CD8-positive, alpha-beta T cell (primary cell): ENCODE measurements at regions of chr20 and their contacts with region 1.

Region 1: DNA sequence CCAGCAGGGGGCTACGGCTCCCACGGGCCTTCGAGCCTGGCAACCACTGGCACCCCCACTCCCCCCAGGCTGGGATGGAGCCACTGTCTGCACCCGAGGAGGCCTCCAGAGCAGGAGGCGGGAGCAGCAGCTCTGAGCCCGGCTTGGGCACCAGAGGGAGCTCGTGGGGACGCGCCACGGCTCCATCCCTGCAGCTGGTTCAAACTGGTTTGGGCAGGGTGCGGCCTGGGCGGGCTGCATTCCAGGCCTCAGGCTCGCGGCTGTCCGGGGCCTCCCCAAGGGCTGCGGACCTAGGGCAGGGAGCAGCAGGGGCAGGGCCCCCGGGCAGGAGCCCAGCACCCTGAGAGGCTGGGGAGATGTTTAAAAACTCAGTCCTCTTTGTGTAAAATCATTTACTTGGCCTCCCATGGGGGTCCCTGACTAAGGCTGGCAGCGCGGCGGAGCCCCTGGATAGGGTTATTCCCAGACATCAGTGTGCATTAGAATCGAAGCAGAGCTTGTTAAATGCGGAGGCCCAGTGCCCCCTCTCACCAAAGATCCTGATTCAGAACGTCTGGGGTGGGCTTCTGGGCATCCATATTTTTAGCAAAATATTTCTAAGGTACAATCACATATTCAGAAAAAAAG is 4.1 kb upstream of the BCAS4 start:
- DNase-seq: peak; percentile 58 to 89 (median 76)
- ATAC-seq: peak; percentile 54
- H3K4me3 ChIP-seq: peak overlapping the region in 1 of 2 experiments; percentile 10
- H3K4me3 Mint-ChIP-seq: peak overlapping the region; percentile 35
- H3K27ac ChIP-seq: peak overlapping the region; percentile 54 to 82
- H3K27ac Mint-ChIP-seq: peak overlapping the region; percentile 78
- H3K4me1 ChIP-seq: peaks cover 20% of the 10 kb centered on the region
- H3K4me1 Mint-ChIP-seq: peaks cover 17% of the 10 kb centered on the region
- H3K27me3 ChIP-seq: no peaks in the 10 kb centered on the region
- H3K27me3 Mint-ChIP-seq: no peaks in the 10 kb centered on the region
- CTCF ChIP-seq: peak; percentile 74

Region 2: DNA sequence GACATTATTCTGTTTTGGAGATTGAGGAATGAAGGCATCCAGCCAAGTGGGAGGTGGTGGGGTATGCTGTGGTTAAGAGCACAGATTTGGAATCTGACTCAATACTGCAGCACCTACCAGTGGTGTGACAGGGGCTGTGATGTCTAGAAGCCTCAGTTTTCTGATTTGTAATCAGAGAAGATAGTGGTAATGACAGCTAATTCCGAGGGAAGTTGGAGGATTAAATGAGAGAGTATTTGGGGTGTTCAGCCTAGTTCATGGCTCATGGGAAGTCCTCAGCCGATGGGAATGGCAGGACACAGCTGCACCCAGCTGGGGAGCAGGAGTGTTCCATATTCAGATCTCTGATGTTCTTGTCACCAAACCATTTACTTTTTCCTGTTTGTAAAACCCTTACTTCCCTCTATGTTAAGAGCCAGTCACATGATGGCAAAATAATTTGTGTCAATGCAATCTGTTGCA is 968.9 kb before region 1 on chr20:
- CTCF ChIA-PET with region 1: no interaction called
- POLR2A ChIA-PET with region 1: no interaction called
- intact Hi-C with region 1: no loop called
- DNase-seq: no peak
- ATAC-seq: no peak
- H3K4me3 ChIP-seq: no peak overlapping the region
- H3K4me3 Mint-ChIP-seq: no peak overlapping the region
- H3K27ac ChIP-seq: no peak overlapping the region
- H3K27ac Mint-ChIP-seq: peak overlapping the region; percentile 82
- H3K4me1 ChIP-seq: peaks cover 39% of the 10 kb centered on the region
- H3K4me1 Mint-ChIP-seq: peaks cover 48% of the 10 kb centered on the region
- H3K27me3 ChIP-seq: no peaks in the 10 kb centered on the region
- H3K27me3 Mint-ChIP-seq: no peaks in the 10 kb centered on the region
- CTCF ChIP-seq: no peak

Region 3: DNA sequence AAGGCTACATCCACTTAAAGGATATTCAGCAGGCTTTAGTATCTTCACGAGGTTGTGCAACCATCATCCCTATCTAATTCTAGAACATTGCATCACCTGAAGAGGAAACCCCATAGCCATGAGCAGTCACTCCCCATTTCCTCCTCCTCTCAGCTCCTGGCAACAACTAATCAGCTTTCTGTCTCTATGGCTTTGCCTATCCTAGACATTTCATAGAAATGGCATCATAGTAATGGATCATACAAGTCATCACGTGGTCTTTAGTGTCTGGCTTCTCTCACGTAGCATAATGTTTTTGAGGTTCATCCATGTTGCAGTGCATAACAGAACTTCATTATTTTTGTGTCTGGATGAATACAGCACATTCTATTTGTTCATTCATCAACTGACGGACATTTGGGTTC is 787.5 kb before region 1 on chr20:
- CTCF ChIA-PET with region 1: no interaction called
- POLR2A ChIA-PET with region 1: no interaction called
- intact Hi-C with region 1: no loop called
- DNase-seq: peak in 1 of 9 experiments; percentile 28
- ATAC-seq: no peak
- H3K4me3 ChIP-seq: no peak overlapping the region
- H3K4me3 Mint-ChIP-seq: no peak overlapping the region
- H3K27ac ChIP-seq: no peak overlapping the region
- H3K27ac Mint-ChIP-seq: no peak overlapping the region
- H3K4me1 ChIP-seq: no peaks in the 10 kb centered on the region
- H3K4me1 Mint-ChIP-seq: peaks cover 3% of the 10 kb centered on the region
- H3K27me3 ChIP-seq: peaks cover 0 to 2% of the 10 kb centered on the region in 2 experiments
- H3K27me3 Mint-ChIP-seq: peaks cover 18% of the 10 kb centered on the region
- CTCF ChIP-seq: no peak

Region 4: GRCh38 chr20:50713657-50714101 is 77.1 kb before region 1 on chr20:
- CTCF ChIA-PET with region 1: no interaction called
- POLR2A ChIA-PET with region 1: no interaction called
- intact Hi-C with region 1: no loop called
- DNase-seq: no peak
- ATAC-seq: no peak
- H3K4me3 ChIP-seq: no peak overlapping the region
- H3K4me3 Mint-ChIP-seq: no peak overlapping the region
- H3K27ac ChIP-seq: no peak overlapping the region
- H3K27ac Mint-ChIP-seq: no peak overlapping the region
- H3K4me1 ChIP-seq: no peaks in the 10 kb centered on the region
- H3K4me1 Mint-ChIP-seq: no peaks in the 10 kb centered on the region
- H3K27me3 ChIP-seq: peaks cover 0 to 3% of the 10 kb centered on the region in 2 experiments
- H3K27me3 Mint-ChIP-seq: peaks cover 20% of the 10 kb centered on the region
- CTCF ChIP-seq: no peak

Region 5: DNA sequence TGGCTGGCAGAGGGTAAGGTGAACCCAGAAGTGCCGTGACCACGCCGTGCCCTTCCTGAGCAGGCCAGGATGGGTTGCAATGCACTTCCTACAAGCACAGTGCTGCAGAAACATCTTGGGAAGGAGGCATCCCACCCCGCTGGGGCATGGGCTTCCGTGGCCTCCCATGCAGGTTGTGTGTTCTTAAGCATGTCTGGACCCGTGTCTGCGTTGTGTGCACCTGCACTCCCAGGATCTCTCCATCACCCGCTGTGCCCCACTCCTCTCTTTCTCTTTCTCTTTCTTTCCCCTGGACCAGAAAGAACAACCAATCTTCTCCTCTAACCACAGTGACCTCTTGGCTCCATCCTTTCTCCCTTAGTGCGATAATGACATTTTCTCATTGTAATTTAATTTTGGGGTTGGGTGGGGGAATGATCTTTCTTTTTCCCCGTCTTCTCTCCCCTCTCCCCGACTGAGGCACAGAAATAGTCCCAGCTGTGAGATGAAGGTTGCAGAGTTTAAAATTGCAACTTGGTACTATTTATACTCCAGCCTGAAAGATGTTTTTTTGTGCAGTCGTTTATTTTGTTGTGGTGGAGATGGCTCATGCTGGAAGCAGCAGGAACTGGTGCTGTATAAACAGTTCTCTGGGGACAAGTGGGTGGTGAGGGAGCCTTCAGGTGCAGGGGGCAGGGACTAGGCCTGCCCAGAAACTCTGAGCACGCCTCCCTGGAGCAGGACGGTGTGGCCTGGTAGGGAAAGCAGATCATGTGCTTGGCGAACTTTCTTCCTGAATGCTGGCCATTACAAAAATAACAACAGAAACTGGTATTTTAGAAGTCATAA is 24.6 kb after region 1 on chr20:
- CTCF ChIA-PET with region 1: interaction called, 57 read pairs
- POLR2A ChIA-PET with region 1: interaction called, 30 read pairs
- intact Hi-C with region 1: loop called (anchors 1 kb)
- DNase-seq: peak in 3 of 9 experiments; percentile 14 to 60 (median 40)
- ATAC-seq: peak; percentile 12
- H3K4me3 ChIP-seq: peak overlapping the region; percentile 12 to 25
- H3K4me3 Mint-ChIP-seq: peak overlapping the region; percentile 82
- H3K27ac ChIP-seq: peak overlapping the region in 1 of 2 experiments; percentile 31
- H3K27ac Mint-ChIP-seq: peak overlapping the region; percentile 93
- H3K4me1 ChIP-seq: peaks cover 44% of the 10 kb centered on the region
- H3K4me1 Mint-ChIP-seq: peaks cover 70% of the 10 kb centered on the region
- H3K27me3 ChIP-seq: no peaks in the 10 kb centered on the region
- H3K27me3 Mint-ChIP-seq: no peaks in the 10 kb centered on the region
- CTCF ChIP-seq: no peak

Region 6: GRCh38 chr20:50850721-50851286 is 60.0 kb after region 1 on chr20:
- CTCF ChIA-PET with region 1: interaction called, 7 read pairs
- POLR2A ChIA-PET with region 1: interaction called, 3 read pairs
- intact Hi-C with region 1: loop called in 1 of 2 experiments (anchors 2 kb)
- DNase-seq: peak in 2 of 9 experiments; percentile 37 to 50
- ATAC-seq: peak; percentile 62
- H3K4me3 ChIP-seq: no peak overlapping the region
- H3K4me3 Mint-ChIP-seq: no peak overlapping the region
- H3K27ac ChIP-seq: peak overlapping the region in 1 of 2 experiments; percentile 17
- H3K27ac Mint-ChIP-seq: peak overlapping the region; percentile 80
- H3K4me1 ChIP-seq: peaks cover 11% of the 10 kb centered on the region
- H3K4me1 Mint-ChIP-seq: peaks cover 23% of the 10 kb centered on the region
- H3K27me3 ChIP-seq: no peaks in the 10 kb centered on the region
- H3K27me3 Mint-ChIP-seq: no peaks in the 10 kb centered on the region
- CTCF ChIP-seq: no peak

Region 7: DNA sequence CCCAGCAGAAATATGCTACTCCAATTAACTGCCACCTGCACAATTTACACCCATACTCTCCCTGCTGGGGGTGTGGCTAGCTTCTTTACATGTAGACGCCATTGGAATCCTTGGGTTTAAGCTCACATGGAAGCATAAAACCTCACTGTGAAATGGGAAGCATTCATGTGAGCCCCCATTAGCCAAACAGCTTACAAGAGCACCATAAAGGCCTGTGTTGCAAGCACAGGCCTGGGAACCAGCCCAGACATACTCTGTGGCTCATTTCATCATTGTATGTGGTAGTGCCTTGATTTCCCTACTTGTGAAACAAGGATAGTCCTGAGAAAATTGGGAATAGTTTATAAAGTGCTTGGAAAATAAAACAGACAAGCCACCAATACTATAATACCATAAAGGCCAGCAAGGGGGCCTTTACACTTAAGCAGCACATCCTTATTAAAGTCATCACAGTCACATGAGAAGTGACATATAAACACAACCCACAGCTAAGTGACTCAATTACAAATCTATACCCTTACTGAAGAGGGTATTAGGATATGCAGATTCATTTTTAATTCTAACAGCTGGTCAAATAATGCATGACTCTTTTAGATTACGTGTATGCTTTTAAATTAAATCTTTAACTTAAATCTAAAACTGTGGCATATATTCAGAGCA is 133.6 kb after region 1 on chr20:
- CTCF ChIA-PET with region 1: interaction called, 119 read pairs
- POLR2A ChIA-PET with region 1: interaction called, 77 read pairs
- intact Hi-C with region 1: loop called (anchors 1 kb)
- DNase-seq: no peak
- ATAC-seq: no peak
- H3K4me3 ChIP-seq: no peak overlapping the region
- H3K4me3 Mint-ChIP-seq: no peak overlapping the region
- H3K27ac ChIP-seq: no peak overlapping the region
- H3K27ac Mint-ChIP-seq: peak overlapping the region; percentile 80
- H3K4me1 ChIP-seq: peaks cover 78% of the 10 kb centered on the region
- H3K4me1 Mint-ChIP-seq: peaks cover 88% of the 10 kb centered on the region
- H3K27me3 ChIP-seq: no peaks in the 10 kb centered on the region
- H3K27me3 Mint-ChIP-seq: no peaks in the 10 kb centered on the region
- CTCF ChIP-seq: no peak

Region 8: DNA sequence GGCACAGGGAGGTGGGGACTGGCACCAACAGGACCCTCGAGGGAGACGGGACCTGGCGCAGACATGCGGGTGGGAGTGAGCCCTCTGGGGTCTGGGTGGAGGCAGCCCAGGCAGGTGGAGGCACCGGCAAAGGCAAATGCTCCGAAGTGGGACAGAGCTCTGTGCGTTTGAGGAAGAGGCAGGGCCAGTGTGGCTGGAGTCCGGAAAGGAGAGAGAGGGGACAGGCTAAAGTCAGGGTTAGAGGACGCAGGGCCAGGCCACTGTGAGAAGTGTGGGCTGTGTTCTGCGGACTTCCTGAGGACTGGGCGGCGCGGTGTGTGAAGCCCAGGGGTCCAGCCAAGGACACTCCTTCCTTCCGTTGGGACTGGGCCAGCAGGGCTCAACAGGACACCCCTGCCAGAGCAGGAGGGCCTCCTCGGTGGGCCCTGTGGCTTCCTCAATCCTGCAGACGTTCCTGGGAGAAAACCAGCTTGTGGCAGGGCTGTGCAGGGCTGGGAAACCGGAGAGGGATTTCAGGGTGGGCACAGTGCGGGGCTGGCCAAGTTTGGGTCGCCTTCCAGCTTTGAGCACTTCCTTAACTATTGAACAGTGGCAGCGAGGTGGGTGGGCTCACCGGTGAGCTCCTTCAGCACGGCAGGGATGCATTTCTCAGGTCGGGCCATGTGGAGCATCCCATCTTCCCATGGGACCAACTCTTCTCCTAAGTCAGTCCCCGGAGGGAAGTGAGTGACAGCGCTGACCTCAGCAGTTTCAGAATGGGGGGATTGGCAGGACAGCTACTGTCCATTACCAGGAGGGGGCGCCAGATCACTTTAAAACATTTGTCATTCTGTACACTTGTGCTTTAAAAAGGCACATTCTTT is 190.3 kb after region 1 on chr20:
- CTCF ChIA-PET with region 1: interaction called, 3 read pairs
- POLR2A ChIA-PET with region 1: no interaction called
- intact Hi-C with region 1: loop called (anchors 5 to 10 kb)
- DNase-seq: peak; percentile 22 to 75 (median 70)
- ATAC-seq: peak; percentile 65
- H3K4me3 ChIP-seq: no peak overlapping the region
- H3K4me3 Mint-ChIP-seq: no peak overlapping the region
- H3K27ac ChIP-seq: no peak overlapping the region
- H3K27ac Mint-ChIP-seq: no peak overlapping the region
- H3K4me1 ChIP-seq: no peaks in the 10 kb centered on the region
- H3K4me1 Mint-ChIP-seq: peaks cover 2% of the 10 kb centered on the region
- H3K27me3 ChIP-seq: no peaks in the 10 kb centered on the region
- H3K27me3 Mint-ChIP-seq: peaks cover 34% of the 10 kb centered on the region
- CTCF ChIP-seq: peak; percentile 82

Region 9: DNA sequence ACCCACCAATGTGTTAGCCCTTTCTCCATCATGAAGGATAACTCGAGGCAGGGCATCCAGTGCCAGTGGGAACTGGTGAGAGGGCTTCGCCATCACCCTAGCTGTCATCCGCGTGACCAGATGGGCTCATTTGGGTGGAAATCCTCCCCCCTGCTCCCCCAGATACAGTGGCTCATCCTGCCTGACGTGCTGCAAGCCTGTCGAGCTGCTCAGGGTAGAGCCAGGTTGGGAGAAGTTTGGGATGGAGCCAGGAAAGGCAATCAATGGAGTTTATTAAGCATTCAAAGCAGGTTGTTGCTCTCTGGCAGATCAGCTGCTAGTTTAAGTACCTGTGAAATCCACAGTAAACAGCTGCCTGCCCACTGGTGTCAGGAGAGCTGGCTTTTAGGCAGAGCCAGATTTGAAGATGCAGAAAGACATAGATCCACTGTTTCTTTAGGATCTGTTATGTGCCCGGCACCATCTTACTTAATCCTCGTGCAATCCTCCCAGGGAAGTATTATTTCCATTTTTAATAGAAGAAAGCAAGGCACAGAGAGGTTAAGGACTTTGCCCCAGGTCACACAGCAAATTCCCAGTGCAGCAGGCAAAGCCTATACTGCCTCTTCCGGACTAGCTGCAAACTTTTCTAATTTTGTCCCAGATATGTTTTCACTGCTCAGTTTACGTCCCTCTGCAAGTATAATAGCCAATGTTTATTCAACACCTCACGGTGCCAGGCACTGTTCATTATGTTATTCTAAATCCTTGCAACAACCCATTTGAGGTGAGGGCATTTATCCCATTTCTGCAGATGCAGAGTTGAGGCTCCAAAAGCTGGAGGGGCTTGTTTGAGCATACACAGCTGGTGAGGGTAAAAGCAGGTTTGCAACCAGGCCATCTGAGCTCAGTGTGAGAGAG is 286.3 kb after region 1 on chr20:
- CTCF ChIA-PET with region 1: no interaction called
- POLR2A ChIA-PET with region 1: no interaction called
- intact Hi-C with region 1: no loop called
- DNase-seq: no peak
- ATAC-seq: no peak
- H3K4me3 ChIP-seq: no peak overlapping the region
- H3K4me3 Mint-ChIP-seq: no peak overlapping the region
- H3K27ac ChIP-seq: no peak overlapping the region
- H3K27ac Mint-ChIP-seq: no peak overlapping the region
- H3K4me1 ChIP-seq: no peaks in the 10 kb centered on the region
- H3K4me1 Mint-ChIP-seq: peaks cover 5% of the 10 kb centered on the region
- H3K27me3 ChIP-seq: peaks cover 0 to 3% of the 10 kb centered on the region in 2 experiments
- H3K27me3 Mint-ChIP-seq: peaks cover 39% of the 10 kb centered on the region
- CTCF ChIP-seq: no peak